PC-3 (cell line): ENCODE measurements at regions of chr17 and their contacts with region 1.

Region 1: GRCh38 chr17:6913608-6914443 is 82.0 kb upstream of the ALOX12 start:
- DNase-seq: peak; percentile 8
- ATAC-seq: no peak
- H3K4me3 ChIP-seq: no peak overlapping the region
- H3K27ac ChIP-seq: no peak overlapping the region
- H3K4me1 ChIP-seq: no peaks in the 10 kb centered on the region
- H3K27me3 ChIP-seq: no peaks in the 10 kb centered on the region
- CTCF ChIP-seq: peak; percentile 52

Region 2: GRCh38 chr17:6930749-6931148 is 16.9 kb after region 1 on chr17:
- CTCF ChIA-PET with region 1: no interaction called
- POLR2A ChIA-PET with region 1: no interaction called
- intact Hi-C with region 1: no loop called
- DNase-seq: no peak
- ATAC-seq: no peak
- H3K4me3 ChIP-seq: no peak overlapping the region
- H3K27ac ChIP-seq: no peak overlapping the region
- H3K4me1 ChIP-seq: no peaks in the 10 kb centered on the region
- H3K27me3 ChIP-seq: no peaks in the 10 kb centered on the region
- CTCF ChIP-seq: no peak

Region 3: GRCh38 chr17:6969323-6969726 is 55.5 kb after region 1 on chr17:
- CTCF ChIA-PET with region 1: interaction called, 11 read pairs
- POLR2A ChIA-PET with region 1: no interaction called
- intact Hi-C with region 1: no loop called
- DNase-seq: peak; percentile 39
- ATAC-seq: no peak; the same call in 1 of the 2 replicates
- H3K4me3 ChIP-seq: no peak overlapping the region
- H3K27ac ChIP-seq: no peak overlapping the region
- H3K4me1 ChIP-seq: peaks cover 5% of the 10 kb centered on the region; the same call in 1 of the 2 replicates
- H3K27me3 ChIP-seq: no peaks in the 10 kb centered on the region
- CTCF ChIP-seq: no peak

Region 4: DNA sequence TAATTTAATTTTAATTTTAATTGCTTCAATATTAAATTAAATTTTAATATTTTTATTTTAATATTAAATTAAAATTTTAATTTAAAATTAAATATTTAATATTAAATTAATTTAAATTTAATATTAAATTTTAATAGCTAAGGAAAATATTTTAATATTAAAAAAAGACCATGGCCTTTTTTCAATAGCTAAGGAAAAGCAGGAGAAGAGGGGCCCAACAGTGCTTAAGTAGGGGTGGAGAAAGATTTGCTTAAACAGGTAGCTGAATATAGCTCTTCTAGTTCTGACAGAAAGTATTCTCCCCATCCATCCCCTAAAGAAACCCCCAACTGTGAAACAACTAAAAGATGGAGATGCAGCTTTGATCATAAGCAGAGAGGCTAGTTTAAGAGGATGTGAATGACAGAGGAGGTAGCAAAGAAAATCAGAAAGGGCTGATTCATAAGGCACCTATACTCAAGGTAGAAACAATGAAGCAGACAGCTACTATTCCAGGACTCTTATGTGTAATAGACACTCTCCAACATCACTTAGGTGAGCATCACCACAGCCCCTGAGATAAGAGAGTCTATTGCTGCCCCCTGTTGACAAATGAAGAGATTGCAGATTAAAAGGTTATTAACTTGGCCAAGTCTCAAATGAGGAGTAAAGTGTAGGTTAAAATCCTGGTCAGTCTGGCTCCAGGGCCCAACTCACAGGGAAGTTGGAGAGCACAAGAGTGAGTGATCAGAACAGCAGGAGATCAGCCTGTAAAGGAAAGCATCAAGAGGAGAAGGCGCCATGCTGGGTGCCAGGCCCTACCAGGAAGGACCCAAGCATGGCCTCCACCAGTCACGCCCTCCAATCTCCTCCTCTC is 90.8 kb after region 1 on chr17:
- CTCF ChIA-PET with region 1: interaction called, 6 read pairs
- POLR2A ChIA-PET with region 1: no interaction called
- intact Hi-C with region 1: loop called (anchors 2 kb)
- DNase-seq: peak; percentile 82
- ATAC-seq: peak; percentile 71
- H3K4me3 ChIP-seq: no peak overlapping the region
- H3K27ac ChIP-seq: no peak overlapping the region
- H3K4me1 ChIP-seq: no peaks in the 10 kb centered on the region
- H3K27me3 ChIP-seq: no peaks in the 10 kb centered on the region
- CTCF ChIP-seq: peak; percentile 80

Region 5: DNA sequence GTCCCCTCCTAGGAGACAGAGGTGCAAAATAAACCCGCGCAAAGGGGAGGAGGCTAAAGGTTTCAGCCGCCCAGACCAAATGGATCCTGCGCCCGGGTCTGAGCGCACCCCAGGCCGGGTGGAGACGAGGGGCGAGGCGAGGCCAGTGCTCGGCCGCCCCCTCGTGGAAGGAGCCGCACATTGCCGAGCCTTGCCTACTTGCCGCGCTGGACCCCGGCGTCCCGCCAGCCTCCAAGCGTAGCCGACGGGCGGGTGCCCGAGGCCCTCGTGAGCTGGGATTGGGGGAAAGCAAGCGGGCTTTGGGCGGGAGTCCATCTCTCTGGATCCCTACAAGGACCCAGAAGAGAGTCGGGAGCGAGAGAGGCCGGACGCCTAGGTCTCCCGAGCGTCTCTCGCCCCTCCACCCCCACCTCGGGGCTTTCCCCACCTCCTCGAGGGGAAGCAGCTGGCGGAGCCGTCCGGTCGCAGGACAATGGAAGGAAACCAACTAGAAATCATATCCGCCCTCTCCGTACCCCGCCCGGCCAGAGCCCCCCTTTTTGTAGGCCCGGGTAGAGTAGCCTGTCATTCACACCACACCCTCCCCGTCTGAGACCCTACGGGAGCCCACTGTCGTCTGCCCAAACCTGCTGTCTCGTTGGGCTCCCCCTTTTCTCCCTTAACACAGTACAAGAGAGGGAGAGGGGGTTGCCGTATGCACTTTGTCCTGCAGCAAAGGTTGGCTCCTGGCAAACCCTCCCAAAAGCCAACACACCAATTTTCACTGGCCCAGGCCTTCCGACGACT is 108.4 kb after region 1 on chr17:
- CTCF ChIA-PET with region 1: no interaction called
- POLR2A ChIA-PET with region 1: no interaction called
- intact Hi-C with region 1: loop called (anchors 1 kb)
- DNase-seq: peak; percentile 73
- ATAC-seq: peak; percentile 73
- H3K4me3 ChIP-seq: peak overlapping the region; percentile 54
- H3K27ac ChIP-seq: no peak overlapping the region
- H3K4me1 ChIP-seq: peaks cover 12% of the 10 kb centered on the region; the same call in 1 of the 2 replicates
- H3K27me3 ChIP-seq: no peaks in the 10 kb centered on the region
- CTCF ChIP-seq: peak; percentile 79